ENCODE measurements at regions of chr11 and their contacts with region 1.

Region 1: GRCh38 chr11:29328961-29329441 is 687.8 kb downstream of the KCNA4 start:
- DNase-seq: no peak
- ATAC-seq: peak; percentile 76
- H3K4me3 ChIP-seq: no peak overlapping the region
- H3K27ac ChIP-seq: no peak overlapping the region
- H3K4me1 ChIP-seq: no peaks in the 10 kb centered on the region
- H3K27me3 ChIP-seq: no peaks in the 10 kb centered on the region
- CTCF ChIP-seq: peak; percentile 41 to 61 (median 59); a peak in 5 of 6 replicates
- EP300 ChIP-seq: no peak
- POLR2A ChIP-seq: no peak
- RAD21 ChIP-seq: peak; percentile 74

Region 2: GRCh38 chr11:27795955-27796861 is 1532.8 kb before region 1 on chr11:
- CTCF ChIA-PET with region 1: no interaction called
- POLR2A ChIA-PET with region 1: no interaction called
- RAD21 ChIA-PET with region 1: no interaction called
- SMC1A ChIA-PET with region 1: no interaction called
- in situ Hi-C with region 1: no loop called
- intact Hi-C with region 1: loop called (anchors 10 kb)
- DNase-seq: no peak
- ATAC-seq: peak; percentile 27
- H3K4me3 ChIP-seq: no peak overlapping the region
- H3K27ac ChIP-seq: no peak overlapping the region
- H3K4me1 ChIP-seq: no peaks in the 10 kb centered on the region
- H3K27me3 ChIP-seq: no peaks in the 10 kb centered on the region
- CTCF ChIP-seq: no peak
- EP300 ChIP-seq: no peak
- POLR2A ChIP-seq: no peak
- RAD21 ChIP-seq: no peak

Region 3: DNA sequence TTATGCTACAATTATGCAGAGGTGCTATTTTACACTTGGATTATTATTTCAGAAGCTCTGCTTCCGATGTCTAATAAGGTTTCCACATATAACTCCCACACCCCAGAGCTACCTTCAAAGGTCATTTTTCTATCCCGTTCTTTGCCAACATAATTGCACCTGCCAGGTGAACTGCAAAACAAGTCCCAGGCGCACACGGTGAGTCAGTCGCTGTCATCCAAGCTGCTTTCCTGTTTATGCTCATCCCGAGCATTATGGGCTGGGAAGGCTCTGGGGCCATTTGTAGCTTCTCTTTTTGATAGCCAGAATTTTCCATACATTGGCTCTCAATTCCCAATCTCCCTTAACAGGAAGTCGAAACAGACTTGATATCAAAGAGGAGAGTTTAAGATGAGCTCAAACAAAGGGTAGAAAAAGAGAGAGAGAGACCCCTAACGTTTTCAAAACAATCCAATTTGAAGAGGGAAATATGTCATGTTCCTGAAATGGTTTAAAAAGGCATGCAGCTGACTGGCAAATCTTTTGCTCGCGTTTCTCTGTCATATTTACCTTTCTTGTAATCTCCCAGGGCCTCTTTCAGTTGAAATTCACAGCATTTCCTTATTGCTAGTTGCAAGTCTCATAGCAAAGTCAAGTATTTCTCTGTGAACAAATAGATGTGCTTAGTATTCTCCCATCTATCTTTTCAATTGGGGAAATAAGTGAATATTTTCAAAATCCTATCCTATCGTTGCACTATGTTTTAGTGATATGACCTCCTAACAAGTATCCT is 128.0 kb before region 1 on chr11:
- CTCF ChIA-PET with region 1: interaction called, 6 read pairs
- POLR2A ChIA-PET with region 1: no interaction called
- RAD21 ChIA-PET with region 1: interaction called, 7 read pairs
- SMC1A ChIA-PET with region 1: interaction called, 13 read pairs
- in situ Hi-C with region 1: no loop called
- intact Hi-C with region 1: no loop called
- DNase-seq: no peak
- ATAC-seq: no peak
- H3K4me3 ChIP-seq: no peak overlapping the region
- H3K27ac ChIP-seq: no peak overlapping the region
- H3K4me1 ChIP-seq: no peaks in the 10 kb centered on the region
- H3K27me3 ChIP-seq: no peaks in the 10 kb centered on the region
- CTCF ChIP-seq: no peak
- EP300 ChIP-seq: no peak
- POLR2A ChIP-seq: no peak
- RAD21 ChIP-seq: no peak

Region 4: DNA sequence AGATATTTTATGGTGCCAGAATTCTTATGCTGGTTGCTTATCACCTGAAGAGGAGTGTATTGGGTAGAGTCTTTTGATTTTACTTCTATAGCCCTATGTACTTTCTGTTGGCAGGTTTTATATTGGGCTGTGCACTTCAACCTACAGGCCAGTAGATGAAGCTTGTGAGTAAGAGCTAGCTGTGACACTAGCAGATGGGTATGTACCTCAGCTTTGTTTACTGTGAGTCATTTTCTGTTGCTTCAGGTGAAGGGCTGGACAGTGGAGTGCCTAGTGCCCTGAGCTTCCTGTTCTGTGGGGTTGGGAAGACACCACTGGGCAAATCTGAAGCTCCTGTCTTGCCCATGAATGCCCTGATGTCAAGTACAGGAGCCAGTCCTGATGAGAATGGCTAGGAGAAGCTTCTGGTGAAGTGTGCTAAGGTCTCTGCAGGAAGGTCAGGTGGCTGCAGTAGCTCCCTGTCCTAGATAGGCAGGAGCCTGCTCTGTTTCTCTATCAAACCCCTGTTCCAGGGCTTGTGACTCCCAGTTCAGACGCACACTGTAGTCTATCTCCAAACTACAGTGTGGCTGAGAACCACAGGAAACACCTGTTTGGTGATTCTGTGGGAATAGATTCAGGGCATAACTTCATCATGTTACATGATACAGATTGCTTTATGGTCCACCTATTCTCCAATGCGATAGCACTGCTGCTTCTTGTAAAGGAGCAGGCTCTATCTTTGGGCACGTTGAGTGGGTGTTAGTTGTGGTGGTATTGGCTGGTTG is 67.9 kb before region 1 on chr11:
- CTCF ChIA-PET with region 1: interaction called, 18 read pairs
- POLR2A ChIA-PET with region 1: interaction called, 4 read pairs
- RAD21 ChIA-PET with region 1: interaction called, 21 read pairs
- SMC1A ChIA-PET with region 1: interaction called, 16 read pairs
- in situ Hi-C with region 1: no loop called
- intact Hi-C with region 1: no loop called
- DNase-seq: no peak
- ATAC-seq: peak; percentile 58
- H3K4me3 ChIP-seq: no peak overlapping the region
- H3K27ac ChIP-seq: no peak overlapping the region
- H3K4me1 ChIP-seq: no peaks in the 10 kb centered on the region
- H3K27me3 ChIP-seq: 0 out of 4 replicates have a peak, but pooled peaks cover 0 to 2% of the 10 kb centered on the region in 2 experiments
- CTCF ChIP-seq: 0 out of 6 replicates have a peak, but pooled peaks of 1 of the 3 experiments have one; percentile 6
- EP300 ChIP-seq: no peak
- POLR2A ChIP-seq: no peak
- RAD21 ChIP-seq: no peak

Region 5: GRCh38 chr11:29293825-29294224 is 35.2 kb before region 1 on chr11:
- CTCF ChIA-PET with region 1: interaction called, 45 read pairs
- POLR2A ChIA-PET with region 1: no interaction called
- RAD21 ChIA-PET with region 1: interaction called, 17 read pairs
- SMC1A ChIA-PET with region 1: interaction called, 24 read pairs
- in situ Hi-C with region 1: no loop called
- intact Hi-C with region 1: loop called (anchors 2 kb)
- DNase-seq: peak; percentile 45
- ATAC-seq: peak; percentile 96
- H3K4me3 ChIP-seq: no peak overlapping the region
- H3K27ac ChIP-seq: no peak overlapping the region
- H3K4me1 ChIP-seq: no peaks in the 10 kb centered on the region
- H3K27me3 ChIP-seq: no peaks in the 10 kb centered on the region
- CTCF ChIP-seq: no peak
- EP300 ChIP-seq: peak; percentile 98 to 99
- POLR2A ChIP-seq: no peak
- RAD21 ChIP-seq: no peak

Region 6: GRCh38 chr11:29353833-29354232 is 24.8 kb after region 1 on chr11:
- CTCF ChIA-PET with region 1: no interaction called
- POLR2A ChIA-PET with region 1: no interaction called
- RAD21 ChIA-PET with region 1: no interaction called
- SMC1A ChIA-PET with region 1: no interaction called
- in situ Hi-C with region 1: no loop called
- intact Hi-C with region 1: no loop called
- DNase-seq: no peak
- ATAC-seq: no peak
- H3K4me3 ChIP-seq: no peak overlapping the region
- H3K27ac ChIP-seq: no peak overlapping the region
- H3K4me1 ChIP-seq: no peaks in the 10 kb centered on the region
- H3K27me3 ChIP-seq: no peaks in the 10 kb centered on the region
- CTCF ChIP-seq: no peak
- EP300 ChIP-seq: no peak
- POLR2A ChIP-seq: no peak
- RAD21 ChIP-seq: no peak